Right ventricle myocardium inferior (tissue), 1 donor: ENCODE measurements at regions of chr2 and their contacts with region 1.

Region 1: DNA sequence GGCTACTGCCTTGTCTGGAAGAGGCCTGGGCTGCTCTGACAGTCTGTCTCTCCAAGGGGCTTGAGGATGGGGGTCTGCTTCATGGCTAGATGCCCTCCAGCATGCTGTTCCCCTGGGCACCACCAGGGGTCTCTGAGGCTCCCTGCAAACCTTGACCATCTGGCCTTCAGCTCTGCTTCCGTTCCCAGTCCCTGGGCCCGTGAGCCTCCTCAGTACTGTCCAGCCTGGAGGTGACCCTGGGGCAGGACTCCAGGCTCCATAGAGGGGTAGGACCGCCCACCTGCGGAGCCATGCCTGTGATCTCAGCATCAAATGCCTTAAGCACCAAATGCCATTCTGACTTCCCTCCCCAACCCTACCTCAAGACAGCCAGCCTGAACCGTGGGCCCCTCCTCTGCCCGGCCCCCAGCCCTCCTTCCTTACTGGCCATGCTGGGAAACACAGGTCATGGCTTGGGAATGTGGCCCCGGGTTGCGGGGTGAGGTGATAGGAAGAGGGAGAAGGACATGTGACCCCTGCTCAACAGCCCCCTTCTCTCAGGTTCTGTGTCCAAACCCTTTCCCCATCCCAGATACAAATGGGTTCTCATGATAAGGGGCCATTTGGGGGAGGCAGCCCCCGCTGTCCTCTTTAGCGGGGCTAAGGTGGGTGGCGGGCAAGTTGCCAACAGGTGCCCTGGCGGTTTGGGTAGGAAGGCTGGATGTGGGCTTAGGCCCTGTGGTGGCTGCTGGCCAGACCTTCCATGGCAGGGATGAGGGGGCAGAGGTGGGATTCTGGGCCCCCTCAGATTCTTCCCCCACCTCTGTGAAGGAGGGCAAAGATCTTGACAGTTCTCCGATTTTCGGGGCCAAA is 25.0 kb downstream of the SPEG start:
- DNase-seq: peak; percentile 76
- ATAC-seq: peak; percentile 62

Region 2: GRCh38 chr2:219441451-219442255 is 18.0 kb before region 1 on chr2:
- intact Hi-C with region 1: loop called (anchors 2 kb)
- DNase-seq: peak; percentile 60
- ATAC-seq: peak; percentile 44

Region 3: DNA sequence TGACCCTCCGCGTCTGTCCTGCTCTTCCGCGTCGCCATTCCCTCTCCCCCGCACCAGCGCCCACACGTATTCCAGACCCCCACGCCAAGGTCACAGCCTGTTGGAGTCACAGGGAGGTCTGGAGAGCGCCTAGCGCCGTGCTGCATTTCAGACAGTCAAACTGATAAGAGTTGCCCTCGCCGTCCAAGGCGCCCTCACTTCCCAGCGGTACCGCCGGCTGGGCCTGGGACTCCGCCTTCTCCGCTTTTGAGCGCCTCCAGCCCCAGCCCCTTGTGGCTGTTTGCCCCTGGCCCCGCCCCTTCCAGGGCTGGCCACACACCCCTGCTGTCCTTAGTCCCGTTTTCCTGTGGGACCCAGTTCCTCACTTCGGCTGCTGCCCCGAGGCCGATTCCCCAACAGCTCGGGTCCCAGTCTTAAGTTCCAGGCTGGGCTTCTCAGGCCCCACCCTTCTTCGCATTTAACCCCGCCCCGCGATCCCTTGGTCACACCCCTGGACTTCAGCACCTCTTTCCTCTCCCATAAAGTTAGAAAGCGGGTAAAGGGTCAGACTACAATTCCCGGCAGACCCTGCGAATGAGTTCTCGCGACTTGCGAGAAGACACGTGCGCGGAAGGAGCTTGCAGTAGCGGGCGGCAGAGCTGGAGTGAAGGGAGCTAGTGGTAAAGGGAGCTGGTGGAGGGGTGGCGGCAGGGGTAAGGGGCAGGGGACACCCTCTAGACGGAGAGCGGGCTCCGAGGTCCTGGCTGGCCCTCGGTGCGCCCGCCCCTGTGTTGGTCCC is 38.8 kb after region 1 on chr2 and contains the start of gene GMPPA:
- intact Hi-C with region 1: loop called (anchors 1 kb)
- DNase-seq: peak; percentile 95
- ATAC-seq: peak; percentile 91
- total RNA-seq, gene GMPPA: 22.9 TPM

Region 4: DNA sequence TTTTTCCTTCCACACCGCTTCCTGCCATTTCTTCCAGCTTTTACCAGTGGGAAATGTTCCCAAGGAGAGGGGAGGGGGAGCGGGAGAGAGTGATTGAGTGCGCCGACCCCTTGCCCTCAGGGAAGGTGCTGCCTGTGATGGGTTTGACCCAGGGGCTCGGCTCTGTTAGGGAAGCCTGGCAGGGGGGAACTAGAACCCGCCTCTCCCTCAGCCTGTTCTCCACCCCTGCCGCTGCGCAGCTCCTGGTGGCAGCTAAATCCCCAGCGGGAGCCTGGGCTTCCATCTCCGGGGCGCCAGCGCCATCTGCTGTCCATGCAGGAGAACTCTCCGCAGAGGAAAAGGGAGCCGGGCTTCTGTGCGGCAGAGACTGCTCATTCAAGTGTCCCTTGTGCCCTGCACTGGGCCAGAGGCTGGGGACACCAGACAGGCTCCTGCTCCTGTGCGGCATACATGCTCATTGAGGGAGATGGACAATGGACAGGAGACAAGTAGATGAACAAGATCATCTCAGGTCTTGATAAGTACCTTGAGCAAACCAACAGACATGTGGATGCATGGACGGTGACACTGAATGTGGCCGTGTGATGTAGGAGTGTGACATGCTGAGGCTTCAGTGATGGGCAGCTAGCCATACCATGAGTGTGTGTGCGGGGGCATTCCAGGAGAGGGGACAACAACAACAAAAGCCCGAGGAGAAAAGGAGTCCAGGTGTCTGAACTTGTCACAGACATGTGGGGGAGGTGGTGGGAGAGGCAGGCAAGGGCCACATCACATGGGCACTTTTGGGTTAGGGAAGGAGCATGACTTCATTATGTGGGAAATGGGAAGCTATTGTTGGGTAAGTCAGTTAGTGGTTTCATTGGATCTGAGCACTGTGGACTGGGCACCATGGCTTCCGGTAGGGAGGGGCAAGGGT is 70.6 kb after region 1 on chr2:
- intact Hi-C with region 1: loop called (anchors 1 kb)
- DNase-seq: peak; percentile 93
- ATAC-seq: peak; percentile 85